Transverse colon (tissue), 4 donors: ENCODE measurements at regions of chr18 and their contacts with region 1.

Region 1: DNA sequence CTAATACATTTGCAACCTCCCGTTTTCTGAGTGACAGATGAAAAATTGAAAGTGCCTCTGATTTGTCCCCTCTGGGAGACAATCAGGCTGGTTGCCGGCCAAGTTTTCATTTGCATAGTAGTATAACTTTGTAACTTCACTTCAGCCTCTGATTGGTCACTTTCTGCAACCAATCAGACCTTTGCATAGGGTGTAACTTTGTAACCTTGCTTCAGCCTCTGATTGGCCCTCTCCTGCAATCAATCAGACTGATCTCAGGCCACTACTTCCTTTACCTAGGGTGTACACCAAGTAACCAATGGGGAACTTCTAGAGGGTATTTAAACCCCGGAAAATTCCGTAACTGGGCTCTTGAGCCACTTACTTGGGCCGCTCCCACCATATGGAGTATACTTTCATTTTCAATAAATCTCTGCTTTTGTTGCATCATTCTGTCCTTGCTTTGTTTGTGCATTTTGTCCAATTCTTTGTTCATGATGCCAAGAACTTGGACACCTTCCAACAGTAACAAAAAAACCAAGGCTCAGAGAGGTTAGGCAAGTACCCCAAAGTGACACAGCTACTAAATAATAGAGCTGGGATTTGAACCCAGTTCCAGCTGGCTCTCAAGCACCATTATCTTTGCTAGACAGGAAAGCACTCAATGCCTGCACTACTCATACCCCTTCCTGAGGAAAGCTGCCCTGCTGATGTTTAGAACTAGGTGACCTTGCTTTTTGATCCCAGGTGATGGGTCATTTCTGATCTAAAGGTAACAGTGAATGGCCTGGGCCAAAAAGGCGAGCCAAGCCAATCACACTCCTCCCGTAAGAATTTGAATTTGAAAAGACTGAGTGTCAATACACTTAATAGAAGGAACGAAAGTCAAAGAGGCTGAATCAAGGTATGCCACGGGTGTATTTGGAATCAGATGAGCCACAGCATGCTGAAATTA is 10.9 kb upstream of the MYOM1 start:
- DNase-seq: peak; percentile 52
- H3K4me3 ChIP-seq: no peak overlapping the region
- H3K27ac ChIP-seq: no peak overlapping the region
- H3K4me1 ChIP-seq: peaks cover 0 to 17% (median 0%) of the 10 kb centered on the region in 4 donors
- H3K27me3 ChIP-seq: no peaks in the 10 kb centered on the region
- CTCF ChIP-seq: no peak
- EP300 ChIP-seq: no peak
- POLR2A ChIP-seq: no peak

Region 2: GRCh38 chr18:3151399-3152264 is 79.0 kb before region 1 on chr18:
- in situ Hi-C with region 1: loop called in 2 of 4 experiments (anchors 10 to 25 kb)
- intact Hi-C with region 1: no loop called
- DNase-seq: no peak
- H3K4me3 ChIP-seq: peak overlapping the region in 2 of 4 donors; percentile 10 to 38
- H3K27ac ChIP-seq: no peak overlapping the region
- H3K4me1 ChIP-seq: no peaks in the 10 kb centered on the region
- H3K27me3 ChIP-seq: no peaks in the 10 kb centered on the region
- CTCF ChIP-seq: peak; percentile 78 to 84 (median 80)
- EP300 ChIP-seq: no peak
- POLR2A ChIP-seq: no peak

Region 3: DNA sequence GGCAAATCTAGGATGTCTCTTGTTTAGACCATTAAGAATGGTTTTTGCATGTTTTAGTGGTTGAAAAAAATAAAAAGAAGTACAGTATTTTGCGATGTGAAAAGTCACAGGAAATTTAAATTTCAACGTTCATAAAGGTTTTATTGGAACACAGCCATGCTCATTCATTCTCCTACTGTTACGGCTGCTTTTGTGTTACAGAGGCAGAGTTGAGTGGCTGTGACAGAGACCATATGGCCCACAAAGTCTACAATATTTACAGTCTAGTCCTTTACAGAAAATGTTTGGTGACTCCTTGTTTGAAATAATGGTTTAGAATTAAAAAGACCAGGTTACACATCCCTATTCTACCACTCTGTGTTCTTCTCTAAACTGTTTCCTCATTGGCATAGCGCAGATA is 59.0 kb before region 1 on chr18:
- in situ Hi-C with region 1: no loop called
- intact Hi-C with region 1: no loop called
- DNase-seq: no peak
- H3K4me3 ChIP-seq: no peak overlapping the region
- H3K27ac ChIP-seq: no peak overlapping the region
- H3K4me1 ChIP-seq: no peaks in the 10 kb centered on the region
- H3K27me3 ChIP-seq: no peaks in the 10 kb centered on the region
- CTCF ChIP-seq: no peak
- EP300 ChIP-seq: no peak
- POLR2A ChIP-seq: no peak

Region 4: GRCh38 chr18:3209859-3210569 is 20.7 kb before region 1 on chr18:
- in situ Hi-C with region 1: no loop called
- intact Hi-C with region 1: no loop called
- DNase-seq: no peak
- H3K4me3 ChIP-seq: no peak overlapping the region
- H3K27ac ChIP-seq: no peak overlapping the region
- H3K4me1 ChIP-seq: peaks cover 5 to 29% (median 12%) of the 10 kb centered on the region in 4 donors
- H3K27me3 ChIP-seq: no peaks in the 10 kb centered on the region
- CTCF ChIP-seq: no peak
- EP300 ChIP-seq: no peak
- POLR2A ChIP-seq: no peak

Region 5: DNA sequence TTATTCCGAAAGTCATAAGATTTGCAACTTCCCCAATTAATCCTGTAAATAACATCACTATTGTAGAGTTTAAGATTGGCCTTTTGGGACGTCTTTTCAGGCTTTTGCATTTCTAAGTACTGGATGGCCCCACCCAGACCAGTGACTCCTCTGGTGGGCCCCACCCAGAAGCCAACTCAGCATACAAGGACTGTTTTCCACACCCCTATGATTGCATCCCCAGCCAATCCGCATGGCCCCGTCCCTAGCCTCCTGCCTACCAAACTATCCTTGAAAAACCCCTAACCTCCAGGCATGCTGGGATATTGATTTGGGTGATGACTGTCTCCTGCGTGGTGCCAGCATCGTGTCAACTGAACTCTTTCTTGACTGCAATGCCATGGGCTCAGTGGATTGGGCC is 194.8 kb after region 1 on chr18:
- in situ Hi-C with region 1: no loop called
- intact Hi-C with region 1: no loop called
- DNase-seq: no peak
- H3K4me3 ChIP-seq: no peak overlapping the region
- H3K27ac ChIP-seq: no peak overlapping the region
- H3K4me1 ChIP-seq: peaks cover 0 to 7% (median 0%) of the 10 kb centered on the region in 4 donors
- H3K27me3 ChIP-seq: no peaks in the 10 kb centered on the region
- CTCF ChIP-seq: no peak
- EP300 ChIP-seq: no peak
- POLR2A ChIP-seq: no peak